ENCODE measurements at regions of chr18 and their contacts with region 1.

Region 1: DNA sequence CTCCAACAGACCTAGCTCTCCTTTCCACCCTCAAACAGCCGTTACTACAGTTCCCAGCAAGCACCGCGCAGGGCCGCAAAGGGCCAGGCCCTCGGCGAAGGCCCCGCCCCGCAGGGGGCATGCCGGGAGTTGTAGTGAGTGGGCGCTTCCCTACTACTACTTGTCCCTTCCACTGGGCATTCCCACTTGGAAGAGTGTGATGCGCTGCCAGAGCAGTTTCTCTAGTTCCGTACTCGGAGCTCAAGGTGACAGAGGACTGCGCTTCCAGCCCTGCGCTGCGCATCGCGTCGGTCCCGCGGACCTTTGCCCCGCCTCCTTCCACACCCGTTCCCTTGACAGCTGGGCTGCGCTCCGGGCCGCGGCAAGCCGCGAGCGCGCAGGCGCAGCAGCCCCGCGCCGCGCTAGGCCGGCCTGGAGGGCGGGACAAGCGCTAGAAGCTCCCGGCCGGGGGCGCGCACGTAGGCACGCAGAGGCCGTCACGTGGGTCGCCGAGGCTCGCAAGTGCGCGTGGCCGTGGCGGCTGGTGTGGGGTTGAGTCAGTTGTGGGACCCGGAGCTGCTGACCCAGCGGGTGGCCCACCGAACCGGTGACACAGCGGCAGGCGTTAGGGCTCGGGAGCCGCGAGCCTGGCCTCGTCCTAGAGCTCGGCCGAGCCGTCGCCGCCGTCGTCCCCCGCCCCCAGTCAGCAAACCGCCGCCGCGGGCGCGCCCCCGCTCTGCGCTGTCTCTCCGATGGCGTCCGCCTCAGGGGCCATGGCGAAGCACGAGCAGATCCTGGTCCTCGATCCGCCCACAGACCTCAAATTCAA is at the start of gene VAPA:
- DNase-seq: peak; percentile 87 to 96
- H3K4me3 ChIP-seq: peak within 1 kb of the TSS; percentile 84 to 96 (median 90)
- H3K27ac ChIP-seq: peak within 1 kb of the TSS; percentile 88
- H3K4me1 ChIP-seq: peaks cover 3 to 8% (median 5%) of the 10 kb centered on the region in 4 experiments
- H3K27me3 ChIP-seq: no peaks in the 10 kb centered on the region
- CTCF ChIP-seq: no peak
- EP300 ChIP-seq: no peak
- POLR2A ChIP-seq: peak in 1 of 2 experiments; percentile 78; a peak in 2 of 3 replicates
- RAD21 ChIP-seq: no peak
- total RNA-seq, gene VAPA: 128 and 130 TPM in 2 replicates

Region 2: GRCh38 chr18:9925369-9925768 is 11.6 kb after region 1 on chr18:
- CTCF ChIA-PET with region 1: interaction called, 4 read pairs
- POLR2A ChIA-PET with region 1: interaction called, 14 read pairs
- DNase-seq: no peak
- H3K4me3 ChIP-seq: no peak overlapping the region
- H3K27ac ChIP-seq: no peak overlapping the region
- H3K4me1 ChIP-seq: peaks cover 1 to 16% (median 5%) of the 10 kb centered on the region in 4 experiments; a peak in 5 of 7 replicates
- H3K27me3 ChIP-seq: no peaks in the 10 kb centered on the region
- CTCF ChIP-seq: no peak
- EP300 ChIP-seq: no peak
- POLR2A ChIP-seq: no peak
- RAD21 ChIP-seq: no peak

Measured in H1 (cell line).